ENCODE measurements at regions of chr5 and their contacts with region 1.

Region 1: GRCh38 chr5:152505442-152506042 is 100.5 kb upstream of the NMUR2 start:
- DNase-seq: peak in 1 of 2 donors; percentile 65
- ATAC-seq: peak; percentile 68 to 85 (median 83)
- H3K4me3 ChIP-seq: no peak overlapping the region
- H3K4me3 Mint-ChIP-seq: no peak overlapping the region
- H3K27ac ChIP-seq: no peak overlapping the region
- H3K27ac Mint-ChIP-seq: no peak overlapping the region
- H3K4me1 ChIP-seq: no peaks in the 10 kb centered on the region
- H3K4me1 Mint-ChIP-seq: peaks cover 0 to 4% of the 10 kb centered on the region in 2 donors
- H3K27me3 ChIP-seq: no peaks in the 10 kb centered on the region
- H3K27me3 Mint-ChIP-seq: peaks cover 8 to 36% of the 10 kb centered on the region in 2 donors
- CTCF ChIP-seq: peak; percentile 65

Region 2: GRCh38 chr5:151825445-151825844 is 680.1 kb before region 1 on chr5:
- intact Hi-C with region 1: loop called (anchors 2 kb)
- DNase-seq: peak in 1 of 2 donors; percentile 70
- ATAC-seq: peak in 2 of 3 donors; percentile 47 to 60
- H3K4me3 ChIP-seq: no peak overlapping the region
- H3K4me3 Mint-ChIP-seq: no peak overlapping the region
- H3K27ac ChIP-seq: no peak overlapping the region
- H3K27ac Mint-ChIP-seq: no peak overlapping the region
- H3K4me1 ChIP-seq: no peaks in the 10 kb centered on the region
- H3K4me1 Mint-ChIP-seq: peaks cover 5 to 7% of the 10 kb centered on the region in 2 donors
- H3K27me3 ChIP-seq: no peaks in the 10 kb centered on the region
- H3K27me3 Mint-ChIP-seq: no peaks in the 10 kb centered on the region
- CTCF ChIP-seq: peak; percentile 75

Region 3: GRCh38 chr5:152142840-152143469 is 362.6 kb before region 1 on chr5:
- intact Hi-C with region 1: loop called (anchors 5 kb)
- DNase-seq: peak; percentile 51 to 82
- ATAC-seq: peak; percentile 76 to 86 (median 83)
- H3K4me3 ChIP-seq: no peak overlapping the region
- H3K4me3 Mint-ChIP-seq: no peak overlapping the region
- H3K27ac ChIP-seq: no peak overlapping the region
- H3K27ac Mint-ChIP-seq: no peak overlapping the region
- H3K4me1 ChIP-seq: no peaks in the 10 kb centered on the region
- H3K4me1 Mint-ChIP-seq: no peaks in the 10 kb centered on the region
- H3K27me3 ChIP-seq: no peaks in the 10 kb centered on the region
- H3K27me3 Mint-ChIP-seq: peaks cover 3 to 6% of the 10 kb centered on the region in 2 donors
- CTCF ChIP-seq: peak; percentile 91

Region 4: GRCh38 chr5:152205804-152206203 is 299.7 kb before region 1 on chr5:
- intact Hi-C with region 1: no loop called
- DNase-seq: no peak
- ATAC-seq: no peak
- H3K4me3 ChIP-seq: no peak overlapping the region
- H3K4me3 Mint-ChIP-seq: no peak overlapping the region
- H3K27ac ChIP-seq: no peak overlapping the region
- H3K27ac Mint-ChIP-seq: no peak overlapping the region
- H3K4me1 ChIP-seq: no peaks in the 10 kb centered on the region
- H3K4me1 Mint-ChIP-seq: no peaks in the 10 kb centered on the region
- H3K27me3 ChIP-seq: no peaks in the 10 kb centered on the region
- H3K27me3 Mint-ChIP-seq: no peaks in the 10 kb centered on the region
- CTCF ChIP-seq: no peak

Region 5: GRCh38 chr5:152379331-152379730 is 126.2 kb before region 1 on chr5:
- intact Hi-C with region 1: loop called (anchors 1 kb)
- DNase-seq: no peak
- ATAC-seq: no peak
- H3K4me3 ChIP-seq: no peak overlapping the region
- H3K4me3 Mint-ChIP-seq: no peak overlapping the region
- H3K27ac ChIP-seq: no peak overlapping the region
- H3K27ac Mint-ChIP-seq: no peak overlapping the region
- H3K4me1 ChIP-seq: no peaks in the 10 kb centered on the region
- H3K4me1 Mint-ChIP-seq: no peaks in the 10 kb centered on the region
- H3K27me3 ChIP-seq: no peaks in the 10 kb centered on the region
- H3K27me3 Mint-ChIP-seq: no peaks in the 10 kb centered on the region
- CTCF ChIP-seq: no peak